ENCODE measurements at regions of chr12 and their contacts with region 1.

Region 1: DNA sequence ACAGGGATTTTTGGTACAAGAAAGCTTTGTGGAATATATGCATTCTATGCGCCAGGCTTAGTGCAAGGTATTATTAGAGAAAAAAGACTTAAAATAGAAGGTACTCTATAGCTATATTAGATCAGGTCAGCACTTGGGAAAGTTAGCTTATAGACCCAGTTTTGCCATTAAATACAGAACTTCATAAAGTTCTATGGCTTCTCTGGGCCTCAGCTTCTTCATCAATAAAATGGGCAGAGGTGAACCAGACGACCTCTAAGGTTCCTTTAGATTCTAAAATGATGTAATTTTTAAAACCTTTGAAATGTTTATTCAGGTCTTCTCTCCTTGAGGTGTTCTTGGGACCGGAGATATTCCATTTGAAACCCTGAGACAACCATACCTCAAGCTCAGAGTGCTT is 7.1 kb downstream of the CNPY2 start:
- DNase-seq: no peak
- H3K4me3 ChIP-seq: no peak overlapping the region
- H3K27ac ChIP-seq: no peak overlapping the region
- H3K4me1 ChIP-seq: no peaks in the 10 kb centered on the region
- H3K27me3 ChIP-seq: no peaks in the 10 kb centered on the region

Region 2: DNA sequence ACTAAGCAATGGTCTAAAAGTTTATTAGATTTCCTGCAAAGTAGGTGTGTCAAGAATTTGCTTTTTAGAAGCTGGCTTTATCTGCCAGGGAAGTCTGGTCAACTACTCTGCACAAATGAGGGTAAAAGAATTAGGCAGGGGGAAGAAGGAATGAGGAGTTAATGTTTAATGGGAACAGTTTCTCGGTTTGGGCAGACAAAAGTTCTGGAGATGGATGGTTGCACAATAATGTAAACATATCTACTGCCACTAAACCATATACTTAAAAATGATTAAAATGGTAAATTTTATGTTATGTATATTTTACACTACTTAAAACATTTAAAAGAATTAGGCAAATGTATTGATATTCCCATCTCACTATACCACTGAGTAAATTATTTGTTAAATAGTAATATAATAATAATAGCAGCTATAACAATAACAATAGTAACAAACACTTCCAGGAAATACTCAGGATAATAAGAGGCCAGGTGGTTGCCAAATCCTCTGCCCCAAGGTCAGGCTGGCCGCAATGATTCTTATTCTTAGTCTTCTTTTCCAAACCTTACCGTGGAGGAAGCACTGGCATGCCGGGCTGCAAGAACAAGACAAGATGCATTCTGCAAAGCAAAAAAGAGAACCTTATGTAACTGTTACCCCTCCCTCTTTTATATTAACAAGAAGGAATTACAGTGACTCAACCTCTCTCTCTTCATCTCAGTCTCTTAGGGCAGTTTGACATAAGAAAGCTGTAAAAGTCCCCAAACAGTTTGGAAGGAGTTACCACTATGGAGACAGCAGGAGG is 22.5 kb before region 1 on chr12:
- CTCF ChIA-PET with region 1: interaction called, 11 read pairs
- POLR2A ChIA-PET with region 1: interaction called, 5 read pairs
- DNase-seq: no peak
- H3K4me3 ChIP-seq: no peak overlapping the region
- H3K27ac ChIP-seq: no peak overlapping the region
- H3K4me1 ChIP-seq: peaks cover 0 to 4% (median 2%) of the 10 kb centered on the region in 4 experiments
- H3K27me3 ChIP-seq: no peaks in the 10 kb centered on the region

Measured in common myeloid progenitor, CD34-positive (primary cell).